Naive thymus-derived CD4-positive, alpha-beta T cell (primary cell): ENCODE measurements at regions of chr11 and their contacts with region 1.

Region 1: DNA sequence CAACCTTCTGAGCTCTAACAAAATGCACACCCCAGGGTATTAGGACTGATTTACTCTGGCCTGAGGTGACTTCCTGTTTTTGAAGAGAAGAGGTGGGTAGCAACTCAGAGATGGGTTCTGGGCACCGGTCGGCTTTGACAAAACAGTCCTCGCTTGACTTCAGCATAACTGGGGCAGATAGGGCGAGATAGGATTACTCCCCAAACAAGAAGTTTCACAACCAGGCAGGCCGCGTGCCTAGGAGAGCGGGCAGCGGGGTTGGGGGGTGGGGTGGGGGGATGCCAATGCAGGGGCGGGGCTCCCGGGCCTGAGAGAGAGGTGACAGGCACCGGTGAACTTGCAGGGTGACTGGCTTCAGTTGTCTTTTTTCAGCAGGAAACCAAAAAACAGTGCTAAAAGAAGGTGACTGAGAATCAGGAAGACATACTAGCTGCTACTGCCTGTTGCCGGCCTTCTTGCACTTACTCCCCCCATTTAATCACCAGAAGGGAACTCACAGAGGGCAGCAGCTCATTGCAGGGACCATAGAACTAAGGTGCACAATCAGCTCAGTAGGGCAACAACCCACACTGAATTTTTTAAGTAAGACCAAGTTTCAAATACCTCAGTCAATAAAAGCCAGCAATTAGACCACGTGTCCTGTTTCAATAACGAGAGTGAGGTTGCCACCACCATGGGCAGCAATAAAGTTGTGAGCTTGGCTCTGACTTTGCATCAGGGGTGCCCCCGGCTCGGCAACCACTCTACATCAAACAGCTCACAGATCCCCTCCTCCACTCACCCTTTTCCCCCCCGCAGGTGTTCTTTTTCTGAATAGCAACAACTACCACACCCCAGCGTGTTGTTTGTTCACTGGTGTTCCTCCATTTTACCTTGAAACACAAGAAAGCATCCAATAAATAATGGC is 37.2 kb upstream of the ETS1 start:
- DNase-seq: peak; percentile 40 to 78 (median 66)
- ATAC-seq: peak; percentile 79
- H3K4me3 ChIP-seq: peak overlapping the region; percentile 32
- H3K4me3 Mint-ChIP-seq: peak overlapping the region; percentile 74 to 89 (median 82)
- H3K27ac ChIP-seq: peak overlapping the region; percentile 73
- H3K27ac Mint-ChIP-seq: peak overlapping the region; percentile 95 to 100 (median 98)
- H3K4me1 ChIP-seq: peaks cover 52 to 84% of the 10 kb centered on the region in 2 donors
- H3K4me1 Mint-ChIP-seq: peaks cover 82 to 100% (median 99%) of the 10 kb centered on the region in 7 donors
- H3K27me3 ChIP-seq: no peaks in the 10 kb centered on the region
- H3K27me3 Mint-ChIP-seq: no peaks in the 10 kb centered on the region

Region 2: DNA sequence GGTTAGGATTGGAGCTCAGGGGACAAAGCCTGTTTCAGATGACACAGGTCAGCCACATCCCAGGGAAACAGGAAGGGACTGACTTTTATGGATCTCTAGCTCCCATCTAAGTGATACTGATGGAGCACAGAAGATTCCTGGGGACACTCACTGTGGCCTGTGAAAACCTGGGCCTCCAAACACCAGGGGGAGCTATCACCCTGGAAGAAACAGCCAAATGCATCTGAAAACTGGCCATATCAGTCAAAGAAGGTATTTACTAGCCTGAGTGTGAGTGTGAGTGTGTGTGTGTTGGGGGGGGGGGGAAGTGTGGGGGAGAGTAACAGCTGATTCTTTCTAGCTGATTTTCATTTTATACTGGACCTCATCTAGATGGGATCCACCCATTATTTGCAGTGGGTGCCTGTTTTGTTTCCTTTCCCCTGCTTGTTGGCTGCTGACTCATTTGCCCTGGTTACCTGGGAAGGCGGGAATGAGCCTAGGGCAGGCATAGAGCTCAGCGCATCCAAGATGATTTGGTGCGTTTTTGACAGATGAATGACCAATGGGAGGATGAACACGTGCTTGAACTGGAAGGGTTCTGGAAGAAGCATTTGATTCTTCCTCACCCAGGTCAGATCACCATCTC is 1908.0 kb before region 1 on chr11:
- CTCF ChIA-PET with region 1: no interaction called
- POLR2A ChIA-PET with region 1: no interaction called
- intact Hi-C with region 1: no loop called
- DNase-seq: peak in 1 of 9 donors; percentile 26
- ATAC-seq: no peak
- H3K4me3 ChIP-seq: no peak overlapping the region
- H3K4me3 Mint-ChIP-seq: no peak overlapping the region
- H3K27ac ChIP-seq: no peak overlapping the region
- H3K27ac Mint-ChIP-seq: no peak overlapping the region
- H3K4me1 ChIP-seq: no peaks in the 10 kb centered on the region
- H3K4me1 Mint-ChIP-seq: no peaks in the 10 kb centered on the region
- H3K27me3 ChIP-seq: no peaks in the 10 kb centered on the region
- H3K27me3 Mint-ChIP-seq: peaks cover 6 to 53% (median 37%) of the 10 kb centered on the region in 5 donors

Region 3: DNA sequence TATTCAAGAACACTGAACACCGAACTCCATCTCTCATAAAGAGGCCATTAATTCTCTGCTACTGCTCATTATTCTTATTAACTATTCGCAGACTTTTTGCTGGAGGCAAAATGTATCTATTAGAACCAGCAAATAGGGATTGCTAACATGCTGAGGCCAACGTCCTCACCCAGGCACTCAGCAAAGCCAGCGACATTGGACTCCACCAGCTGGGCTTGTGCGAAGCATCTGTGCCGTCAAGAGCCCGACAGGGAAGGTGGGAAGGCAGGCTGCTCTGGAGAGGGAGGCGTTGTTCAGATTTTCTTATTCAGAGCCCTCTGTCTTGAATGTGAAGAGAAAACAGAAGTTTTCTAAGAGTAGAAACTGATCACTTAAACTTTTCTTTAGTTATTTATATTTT is 1008.4 kb before region 1 on chr11:
- CTCF ChIA-PET with region 1: no interaction called
- POLR2A ChIA-PET with region 1: no interaction called
- intact Hi-C with region 1: no loop called
- DNase-seq: no peak
- ATAC-seq: no peak
- H3K4me3 ChIP-seq: no peak overlapping the region
- H3K4me3 Mint-ChIP-seq: no peak overlapping the region
- H3K27ac ChIP-seq: no peak overlapping the region
- H3K27ac Mint-ChIP-seq: no peak overlapping the region
- H3K4me1 ChIP-seq: no peaks in the 10 kb centered on the region
- H3K4me1 Mint-ChIP-seq: no peaks in the 10 kb centered on the region
- H3K27me3 ChIP-seq: no peaks in the 10 kb centered on the region
- H3K27me3 Mint-ChIP-seq: peaks cover 0 to 6% (median 6%) of the 10 kb centered on the region in 5 donors

Region 4: DNA sequence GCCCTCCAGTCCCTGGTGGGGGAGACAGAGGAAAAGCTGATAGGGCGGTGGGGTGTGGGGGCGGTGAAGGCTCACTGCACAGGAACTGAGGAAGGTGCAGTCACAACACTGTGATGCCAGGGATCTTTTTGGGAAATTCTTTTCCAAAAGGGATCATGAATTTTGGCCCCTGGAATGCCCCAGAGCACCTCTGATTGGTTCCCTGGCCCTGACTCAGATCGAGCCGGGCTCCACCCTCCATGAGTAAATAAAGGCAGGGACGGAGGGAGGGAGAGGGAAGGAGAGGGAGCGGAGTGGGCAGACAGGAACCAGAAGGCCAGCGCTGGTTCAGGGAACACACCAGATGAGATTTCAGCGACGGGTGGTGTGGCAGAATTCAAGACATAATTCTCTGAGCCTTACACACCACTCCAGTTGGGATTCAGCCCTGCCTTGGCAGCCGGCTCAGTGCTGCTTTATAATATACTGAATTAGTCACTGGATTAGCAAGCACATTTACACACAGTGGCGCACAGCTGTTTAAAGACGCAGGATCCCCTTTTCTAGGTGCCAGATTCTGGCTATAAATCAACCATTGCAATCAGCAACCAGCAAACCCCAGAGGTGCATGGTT is 117.4 kb before region 1 on chr11:
- CTCF ChIA-PET with region 1: interaction called, 25 read pairs
- POLR2A ChIA-PET with region 1: interaction called, 83 read pairs
- intact Hi-C with region 1: loop called in 1 of 2 experiments (anchors 1 kb)
- DNase-seq: peak in 1 of 9 donors; percentile 60
- ATAC-seq: no peak
- H3K4me3 ChIP-seq: peak overlapping the region; percentile 96
- H3K4me3 Mint-ChIP-seq: peak overlapping the region; percentile 85 to 100 (median 98)
- H3K27ac ChIP-seq: peak overlapping the region; percentile 97
- H3K27ac Mint-ChIP-seq: peak overlapping the region; percentile 87 to 99 (median 97)
- H3K4me1 ChIP-seq: peaks cover 89 to 91% of the 10 kb centered on the region in 2 donors
- H3K4me1 Mint-ChIP-seq: peaks cover 70 to 98% (median 92%) of the 10 kb centered on the region in 7 donors
- H3K27me3 ChIP-seq: no peaks in the 10 kb centered on the region
- H3K27me3 Mint-ChIP-seq: no peaks in the 10 kb centered on the region

Region 5: DNA sequence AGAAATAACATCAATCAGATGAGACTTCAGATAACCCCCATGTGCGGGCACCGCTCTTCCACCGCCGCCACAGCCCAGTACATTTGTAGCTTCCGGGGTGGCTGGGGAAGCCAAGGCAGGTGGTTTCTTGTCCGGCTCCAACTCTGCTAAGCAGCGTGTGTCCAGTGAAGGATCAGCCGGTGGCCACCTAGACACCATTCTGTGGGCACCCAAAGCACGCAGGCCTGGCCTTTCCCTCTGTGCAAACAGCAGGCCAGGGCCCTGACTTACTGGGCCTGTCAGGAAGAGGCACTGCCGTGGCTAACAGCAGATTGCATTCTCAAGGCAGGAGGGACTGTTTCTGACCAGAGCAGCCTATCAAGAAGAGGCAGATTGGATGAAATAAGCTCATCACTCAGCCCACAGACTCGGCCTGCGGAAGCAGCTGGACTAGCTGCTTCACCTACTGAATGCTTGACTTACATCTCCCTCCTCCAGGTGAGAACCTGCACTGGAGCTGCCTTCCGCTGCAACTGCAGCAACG is 112.0 kb before region 1 on chr11:
- CTCF ChIA-PET with region 1: interaction called, 86 read pairs
- POLR2A ChIA-PET with region 1: interaction called, 546 read pairs
- intact Hi-C with region 1: no loop called
- DNase-seq: peak in 5 of 9 donors; percentile 26 to 56 (median 47)
- ATAC-seq: peak; percentile 40
- H3K4me3 ChIP-seq: peak overlapping the region; percentile 96
- H3K4me3 Mint-ChIP-seq: peak overlapping the region; percentile 94 to 100 (median 98)
- H3K27ac ChIP-seq: peak overlapping the region; percentile 97
- H3K27ac Mint-ChIP-seq: peak overlapping the region; percentile 92 to 99 (median 97)
- H3K4me1 ChIP-seq: peaks cover 54 to 59% of the 10 kb centered on the region in 2 donors
- H3K4me1 Mint-ChIP-seq: peaks cover 50 to 94% (median 77%) of the 10 kb centered on the region in 7 donors
- H3K27me3 ChIP-seq: no peaks in the 10 kb centered on the region
- H3K27me3 Mint-ChIP-seq: no peaks in the 10 kb centered on the region

Region 6: GRCh38 chr11:128544471-128545051 is 80.0 kb before region 1 on chr11:
- CTCF ChIA-PET with region 1: interaction called, 5 read pairs
- POLR2A ChIA-PET with region 1: interaction called, 39 read pairs
- intact Hi-C with region 1: no loop called
- DNase-seq: peak in 7 of 9 donors; percentile 30 to 46 (median 38)
- ATAC-seq: peak; percentile 72
- H3K4me3 ChIP-seq: no peak overlapping the region
- H3K4me3 Mint-ChIP-seq: peak overlapping the region; percentile 15 to 93 (median 82)
- H3K27ac ChIP-seq: peak overlapping the region; percentile 44
- H3K27ac Mint-ChIP-seq: peak overlapping the region in 8 of 9 donors; percentile 55 to 99 (median 90)
- H3K4me1 ChIP-seq: peaks cover 7 to 45% of the 10 kb centered on the region in 2 donors
- H3K4me1 Mint-ChIP-seq: peaks cover 33 to 79% (median 74%) of the 10 kb centered on the region in 7 donors
- H3K27me3 ChIP-seq: no peaks in the 10 kb centered on the region
- H3K27me3 Mint-ChIP-seq: peaks cover 0 to 3% (median 0%) of the 10 kb centered on the region in 5 donors

Region 7: DNA sequence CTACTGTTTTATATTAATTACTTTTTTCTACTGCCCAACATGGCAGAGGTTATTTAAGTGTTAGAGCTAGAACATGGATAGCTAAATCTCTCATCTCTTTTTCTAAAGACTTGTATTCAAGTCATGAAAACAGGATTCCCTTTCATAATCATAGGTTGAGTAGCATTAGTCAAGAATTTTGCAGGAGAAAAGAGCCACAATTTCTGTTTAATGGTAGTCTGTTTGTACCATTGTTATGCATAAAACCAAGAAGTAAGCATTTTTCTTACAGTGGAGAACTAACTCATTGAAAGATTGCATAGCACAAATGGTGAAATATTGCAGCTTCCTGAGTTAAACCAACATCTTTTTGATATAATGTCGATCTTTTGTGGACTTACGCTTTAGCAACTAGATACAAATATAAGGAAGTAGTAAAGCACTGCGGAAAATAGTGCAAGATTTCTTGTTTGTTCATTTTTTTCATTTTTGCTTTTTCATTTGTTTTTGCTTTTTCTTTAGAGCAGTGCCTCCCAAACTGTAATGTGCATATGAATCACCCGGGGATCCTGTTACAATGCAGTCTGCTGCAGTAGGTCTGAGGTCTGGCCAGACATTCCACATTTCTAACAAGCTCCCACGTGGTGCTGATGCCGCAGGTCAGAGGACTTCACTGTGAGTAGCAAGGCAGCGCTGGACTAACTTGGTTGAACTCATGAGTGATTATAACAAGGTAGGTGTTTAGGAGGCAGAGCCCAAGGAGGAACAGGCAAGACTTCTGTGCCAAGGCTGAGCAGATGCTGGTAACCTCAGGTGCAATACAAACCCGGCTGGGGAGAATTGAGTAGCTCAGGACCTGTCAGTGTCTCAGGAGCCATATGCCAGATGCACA is 41.8 kb before region 1 on chr11:
- CTCF ChIA-PET with region 1: no interaction called
- POLR2A ChIA-PET with region 1: interaction called, 3 read pairs
- intact Hi-C with region 1: loop called (anchors 1 to 2 kb)
- DNase-seq: no peak
- ATAC-seq: peak; percentile 61
- H3K4me3 ChIP-seq: no peak overlapping the region
- H3K4me3 Mint-ChIP-seq: peak overlapping the region; percentile 15 to 78 (median 70)
- H3K27ac ChIP-seq: no peak overlapping the region
- H3K27ac Mint-ChIP-seq: peak overlapping the region in 7 of 9 donors; percentile 38 to 93 (median 63)
- H3K4me1 ChIP-seq: peaks cover 0 to 6% of the 10 kb centered on the region in 2 donors
- H3K4me1 Mint-ChIP-seq: peaks cover 40 to 67% (median 56%) of the 10 kb centered on the region in 7 donors
- H3K27me3 ChIP-seq: no peaks in the 10 kb centered on the region
- H3K27me3 Mint-ChIP-seq: peaks cover 0 to 21% (median 0%) of the 10 kb centered on the region in 5 donors

Region 8: DNA sequence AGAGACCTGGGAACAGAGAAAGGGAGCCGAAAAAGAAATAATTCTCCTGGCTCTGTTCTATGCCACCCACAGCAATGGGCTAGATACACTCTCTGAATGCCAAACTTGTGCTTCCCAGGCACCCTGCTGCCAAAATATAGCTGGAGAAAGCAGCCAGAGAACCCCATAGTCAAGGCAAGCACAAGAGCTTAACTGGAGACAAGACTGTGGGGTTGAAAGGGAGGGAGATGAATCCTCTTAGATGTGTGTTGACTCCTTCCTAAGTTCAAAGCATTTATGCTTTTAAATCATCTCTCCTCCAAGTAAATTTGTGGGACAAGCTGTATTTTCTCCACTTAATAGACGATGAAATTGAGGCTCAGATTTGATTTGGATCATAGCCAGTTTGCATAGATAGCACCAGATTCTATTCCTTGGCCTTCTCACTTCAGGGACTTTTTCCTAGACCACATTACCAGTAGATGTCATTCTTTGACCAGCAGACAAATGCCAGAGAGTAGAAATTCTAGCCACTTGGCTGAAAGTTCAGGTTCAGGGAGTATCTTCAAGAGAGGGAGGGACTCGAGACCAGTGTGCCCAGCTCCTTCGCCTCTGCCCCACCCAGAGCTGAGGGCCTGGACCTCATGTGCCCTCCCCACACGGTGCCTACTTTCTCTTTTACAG is 20.6 kb before region 1 on chr11:
- CTCF ChIA-PET with region 1: interaction called, 14 read pairs
- POLR2A ChIA-PET with region 1: interaction called, 145 read pairs
- intact Hi-C with region 1: no loop called
- DNase-seq: no peak
- ATAC-seq: no peak
- H3K4me3 ChIP-seq: no peak overlapping the region
- H3K4me3 Mint-ChIP-seq: no peak overlapping the region
- H3K27ac ChIP-seq: no peak overlapping the region
- H3K27ac Mint-ChIP-seq: peak overlapping the region in 3 of 9 donors; percentile 28 to 77 (median 32)
- H3K4me1 ChIP-seq: peaks cover 0 to 34% of the 10 kb centered on the region in 2 donors
- H3K4me1 Mint-ChIP-seq: peaks cover 10 to 86% (median 70%) of the 10 kb centered on the region in 7 donors
- H3K27me3 ChIP-seq: no peaks in the 10 kb centered on the region
- H3K27me3 Mint-ChIP-seq: no peaks in the 10 kb centered on the region

Region 9: DNA sequence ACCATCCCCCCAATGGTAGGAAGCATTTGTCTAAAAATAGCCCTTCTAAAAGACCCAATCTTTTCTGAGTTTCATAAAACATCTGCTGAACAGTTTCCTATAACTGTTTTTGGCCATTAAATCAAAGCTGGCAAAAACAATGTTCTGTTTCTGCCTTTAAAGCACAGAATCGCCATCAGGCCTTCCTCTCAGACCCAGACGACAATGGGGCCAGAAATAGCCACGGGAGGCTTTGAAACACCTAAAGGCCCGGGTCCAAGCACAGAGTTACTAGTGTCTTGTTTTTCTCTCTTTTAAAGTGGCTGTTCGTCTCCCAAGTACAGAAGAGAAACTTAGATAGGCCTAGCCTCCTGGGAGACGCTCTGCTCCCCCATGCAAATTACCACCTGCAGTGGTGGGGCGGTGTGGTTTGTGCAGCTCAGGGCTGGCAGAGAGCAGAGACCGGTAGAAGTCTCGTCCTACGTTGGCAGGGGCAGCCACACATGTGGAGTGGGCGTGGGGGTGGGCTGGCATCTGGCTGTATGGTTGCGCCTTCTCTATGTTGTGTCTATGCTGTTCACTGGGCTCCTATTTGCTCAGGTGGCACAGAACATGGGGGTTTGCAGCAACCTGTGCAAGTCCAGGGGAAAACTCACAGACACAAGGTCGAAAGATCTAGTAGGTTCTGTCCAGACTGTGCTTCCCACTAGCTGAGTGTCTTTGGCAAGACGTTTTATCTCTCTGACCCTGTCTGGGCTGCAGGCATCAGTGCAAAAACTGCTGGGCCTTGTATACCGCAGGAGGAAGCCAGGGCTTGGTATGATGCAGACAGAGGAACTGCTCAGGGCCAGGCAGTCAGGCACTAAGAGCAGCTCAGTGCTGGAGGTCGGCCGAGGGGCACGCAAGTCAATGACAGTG is 13.6 kb before region 1 on chr11:
- CTCF ChIA-PET with region 1: interaction called, 13 read pairs
- POLR2A ChIA-PET with region 1: interaction called, 145 read pairs
- intact Hi-C with region 1: loop called (anchors 1 kb)
- DNase-seq: peak; percentile 34 to 76 (median 62)
- ATAC-seq: peak; percentile 91
- H3K4me3 ChIP-seq: peak overlapping the region; percentile 11
- H3K4me3 Mint-ChIP-seq: peak overlapping the region; percentile 57 to 85 (median 76)
- H3K27ac ChIP-seq: peak overlapping the region; percentile 76
- H3K27ac Mint-ChIP-seq: peak overlapping the region; percentile 87 to 99 (median 95)
- H3K4me1 ChIP-seq: peaks cover 21 to 58% of the 10 kb centered on the region in 2 donors
- H3K4me1 Mint-ChIP-seq: peaks cover 31 to 88% (median 76%) of the 10 kb centered on the region in 7 donors
- H3K27me3 ChIP-seq: no peaks in the 10 kb centered on the region
- H3K27me3 Mint-ChIP-seq: no peaks in the 10 kb centered on the region

Region 10: DNA sequence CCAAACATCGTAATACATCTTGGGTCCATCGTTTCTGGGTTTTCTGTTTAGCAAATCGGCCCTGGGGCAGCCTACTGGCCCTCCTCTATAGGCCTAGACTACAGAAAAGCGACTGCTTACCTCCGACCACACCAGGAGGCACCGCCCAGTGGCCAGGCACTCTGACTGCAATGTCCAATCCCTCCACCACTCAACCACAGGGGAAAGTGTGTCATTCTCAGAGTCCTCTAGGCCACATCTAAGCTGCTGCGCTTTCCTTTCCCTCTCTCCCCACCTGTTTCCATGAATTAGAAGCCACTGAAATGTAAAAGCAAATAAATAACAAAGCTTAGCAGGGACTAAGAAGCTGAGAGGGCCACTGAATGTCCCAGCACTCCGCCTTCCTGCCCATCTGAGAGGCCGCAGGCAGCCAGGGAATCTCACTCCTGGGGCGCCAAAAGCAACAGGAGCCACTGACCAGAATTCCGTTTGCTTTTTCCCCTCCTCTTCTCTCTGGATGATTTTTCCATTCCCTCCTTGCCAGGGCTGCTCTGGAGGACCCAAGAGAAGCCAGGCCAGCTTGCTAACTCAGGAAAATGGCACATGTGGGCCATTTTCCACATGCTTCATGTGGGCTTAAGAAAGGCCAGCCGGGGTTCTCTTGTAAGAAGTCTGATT is 19.3 kb after region 1 on chr11:
- CTCF ChIA-PET with region 1: no interaction called
- POLR2A ChIA-PET with region 1: no interaction called
- intact Hi-C with region 1: no loop called
- DNase-seq: no peak
- ATAC-seq: no peak
- H3K4me3 ChIP-seq: no peak overlapping the region
- H3K4me3 Mint-ChIP-seq: no peak overlapping the region
- H3K27ac ChIP-seq: no peak overlapping the region
- H3K27ac Mint-ChIP-seq: no peak overlapping the region
- H3K4me1 ChIP-seq: no peaks in the 10 kb centered on the region
- H3K4me1 Mint-ChIP-seq: peaks cover 0 to 8% (median 5%) of the 10 kb centered on the region in 7 donors
- H3K27me3 ChIP-seq: no peaks in the 10 kb centered on the region
- H3K27me3 Mint-ChIP-seq: peaks cover 0 to 39% (median 0%) of the 10 kb centered on the region in 5 donors